ENCODE measurements at regions of chr12 and their contacts with region 1.

Region 1: DNA sequence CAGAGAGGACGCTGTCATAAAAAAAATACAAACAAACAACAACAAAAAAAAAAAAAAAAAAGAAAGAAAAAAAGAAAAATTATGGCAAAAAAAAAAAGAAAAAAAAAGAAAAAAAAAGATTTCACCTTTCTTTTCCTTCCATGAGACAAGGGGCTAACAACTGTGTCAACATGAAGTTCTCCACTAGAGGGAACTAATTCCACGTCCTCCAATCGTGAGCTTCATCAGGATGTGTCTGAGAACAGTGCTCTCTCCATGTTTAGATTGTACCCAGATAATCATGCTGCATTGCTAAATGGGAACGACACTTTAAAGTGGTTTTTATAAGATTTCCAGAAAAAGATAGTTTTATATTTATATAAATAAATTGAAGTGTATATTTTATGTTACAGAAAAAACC is 96.2 kb upstream of the PTPRB start:
- DNase-seq: peak in 1 of 3 donors; percentile 58
- ATAC-seq: peak; percentile 70
- H3K4me3 ChIP-seq: no peak overlapping the region
- H3K4me1 ChIP-seq: peaks cover 7% of the 10 kb centered on the region
- CTCF ChIP-seq: peak; percentile 36

Region 2: GRCh38 chr12:69879041-69879960 is 854.1 kb before region 1 on chr12:
- intact Hi-C with region 1: loop called in 1 of 2 experiments (anchors 5 kb)
- DNase-seq: peak; percentile 54 to 88 (median 70)
- ATAC-seq: peak; percentile 96
- H3K4me3 ChIP-seq: no peak overlapping the region
- H3K4me1 ChIP-seq: no peaks in the 10 kb centered on the region
- CTCF ChIP-seq: peak; percentile 71

Region 3: DNA sequence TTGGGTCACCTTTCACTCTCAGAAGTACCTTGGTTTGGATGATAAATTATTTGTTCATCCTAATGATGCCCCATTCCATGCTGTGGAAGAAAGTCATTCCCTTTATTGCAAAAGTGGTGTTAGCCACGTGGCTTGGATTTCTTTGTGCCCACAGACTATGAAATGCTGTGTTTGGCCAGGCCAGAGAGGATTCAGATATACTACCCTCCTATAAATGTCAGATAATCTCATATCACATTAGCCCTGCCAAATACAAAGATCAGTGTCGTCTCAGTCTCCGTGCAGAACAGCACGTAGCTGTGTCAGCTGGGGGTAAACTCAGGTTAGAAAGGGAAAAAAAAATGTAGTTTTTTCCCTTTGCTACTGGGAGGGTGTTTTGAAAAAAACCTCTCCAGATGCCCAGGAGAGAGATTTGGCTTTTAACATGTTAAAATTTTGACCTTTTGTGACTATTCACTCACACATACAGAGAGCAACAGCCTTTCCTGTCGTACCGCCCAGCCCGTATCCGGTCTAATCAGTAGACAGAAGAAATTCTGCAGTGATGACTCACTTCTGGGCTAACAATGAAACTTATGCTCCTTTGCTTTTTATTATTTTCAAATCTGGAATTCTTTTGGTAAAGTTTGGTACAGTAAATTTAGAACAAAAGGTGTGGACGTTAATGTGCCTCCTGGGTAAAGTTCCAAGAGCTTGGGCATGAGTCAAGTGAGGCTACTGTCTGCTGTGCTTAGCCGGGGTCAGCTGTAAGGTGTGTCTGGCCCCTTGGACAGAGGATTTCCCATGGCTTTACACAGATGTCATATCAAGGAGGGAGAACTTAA is 87.7 kb before region 1 on chr12:
- intact Hi-C with region 1: no loop called
- DNase-seq: peak in 2 of 3 donors; percentile 45 to 53
- ATAC-seq: peak; percentile 98
- H3K4me3 ChIP-seq: no peak overlapping the region
- H3K4me1 ChIP-seq: no peaks in the 10 kb centered on the region
- CTCF ChIP-seq: no peak

Region 4: GRCh38 chr12:70849265-70849960 is 116.0 kb after region 1 on chr12:
- intact Hi-C with region 1: loop called in 1 of 2 experiments (anchors 10 kb)
- DNase-seq: no peak
- ATAC-seq: no peak
- H3K4me3 ChIP-seq: no peak overlapping the region
- H3K4me1 ChIP-seq: no peaks in the 10 kb centered on the region
- CTCF ChIP-seq: peak; percentile 15

Region 5: DNA sequence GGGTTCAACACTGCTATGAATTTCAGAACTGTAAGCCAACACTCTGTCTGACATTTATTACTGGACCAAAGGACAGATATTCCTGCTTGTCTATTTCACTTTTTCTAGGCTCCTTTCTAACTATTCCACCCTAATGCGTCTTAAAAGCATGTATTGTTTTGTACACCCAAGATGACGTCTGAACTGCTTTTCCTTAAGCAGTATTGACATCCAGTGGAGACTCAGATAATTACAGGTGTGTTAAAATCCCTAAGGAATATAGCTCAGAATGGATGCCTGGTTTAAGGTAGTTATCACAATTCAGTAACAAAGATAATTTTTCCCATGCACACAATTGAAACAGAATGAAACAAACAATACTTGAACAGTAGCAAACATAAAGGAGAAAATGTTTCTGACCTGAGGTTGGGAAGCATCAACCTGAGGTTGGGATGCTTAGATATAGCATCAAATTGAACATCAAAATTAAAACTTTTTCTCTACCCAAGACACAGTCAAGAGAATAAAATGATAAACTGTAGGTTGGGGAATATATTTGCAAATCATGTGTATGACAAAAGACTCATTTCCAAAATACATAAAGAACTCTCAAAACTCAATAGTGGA is 280.9 kb after region 1 on chr12:
- intact Hi-C with region 1: loop called in 1 of 2 experiments (anchors 5 kb)
- DNase-seq: no peak
- ATAC-seq: peak; percentile 71
- H3K4me3 ChIP-seq: no peak overlapping the region
- H3K4me1 ChIP-seq: no peaks in the 10 kb centered on the region
- CTCF ChIP-seq: no peak

Region 6: GRCh38 chr12:71128191-71128788 is 394.9 kb after region 1 on chr12:
- intact Hi-C with region 1: no loop called
- DNase-seq: no peak
- ATAC-seq: no peak
- H3K4me3 ChIP-seq: no peak overlapping the region
- H3K4me1 ChIP-seq: no peaks in the 10 kb centered on the region
- CTCF ChIP-seq: no peak